Activated CD4-positive, alpha-beta memory T cell treated with anti-CD3 and anti-CD28 coated beads for 36 hours (primary cell): ENCODE measurements at regions of chr7 and their contacts with region 1.

Region 1: GRCh38 chr7:130419658-130420057 is 21.2 kb downstream of the CEP41 start:
- DNase-seq: no peak
- H3K4me3 Mint-ChIP-seq: no peak overlapping the region
- H3K27ac Mint-ChIP-seq: no peak overlapping the region
- H3K4me1 Mint-ChIP-seq: peaks cover 46% of the 10 kb centered on the region
- H3K27me3 Mint-ChIP-seq: no peaks in the 10 kb centered on the region

Region 2: GRCh38 chr7:130363026-130363798 is 56.4 kb before region 1 on chr7:
- CTCF ChIA-PET with region 1: no interaction called
- POLR2A ChIA-PET with region 1: no interaction called
- intact Hi-C with region 1: loop called (anchors 2 kb)
- DNase-seq: peak; percentile 87
- H3K4me3 Mint-ChIP-seq: no peak overlapping the region
- H3K27ac Mint-ChIP-seq: no peak overlapping the region
- H3K4me1 Mint-ChIP-seq: peaks cover 22% of the 10 kb centered on the region
- H3K27me3 Mint-ChIP-seq: peaks cover 2% of the 10 kb centered on the region

Region 3: DNA sequence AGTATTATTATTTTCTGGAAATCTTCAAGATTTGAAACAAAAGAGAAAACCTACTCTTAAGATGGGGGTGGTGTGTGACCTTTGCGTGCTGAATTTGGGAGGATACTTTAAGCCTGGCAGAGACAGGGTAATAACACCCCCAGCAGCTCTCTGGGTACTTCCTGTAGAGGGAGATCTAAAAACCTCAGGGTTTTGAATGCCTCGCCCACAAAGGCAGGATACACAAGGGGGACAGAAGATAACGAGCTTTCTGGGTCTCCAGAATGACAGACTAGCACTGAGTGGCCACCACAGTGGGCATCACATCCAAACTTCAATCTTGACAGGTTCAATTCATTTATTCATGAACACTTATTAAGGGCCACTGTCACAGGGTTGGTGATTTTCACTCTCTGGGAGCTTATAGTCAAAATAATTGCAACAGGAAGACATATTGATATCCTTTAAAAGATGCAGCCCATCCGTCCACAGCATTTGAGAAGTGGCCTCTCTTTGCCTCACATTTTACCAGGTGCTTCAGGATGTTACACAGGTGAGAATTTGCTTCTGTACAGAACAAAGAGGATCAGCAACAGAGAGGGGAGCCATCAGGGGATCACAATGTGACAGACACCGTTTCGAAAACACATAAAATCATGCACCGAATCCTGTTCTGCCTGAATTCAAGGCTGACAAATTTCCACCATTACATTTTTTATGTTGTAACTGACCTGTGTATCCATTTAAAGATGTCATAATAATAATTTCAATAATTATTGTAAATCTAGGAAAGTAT is 25.1 kb before region 1 on chr7:
- CTCF ChIA-PET with region 1: no interaction called
- POLR2A ChIA-PET with region 1: no interaction called
- intact Hi-C with region 1: loop called (anchors 2 kb)
- DNase-seq: peak; percentile 21
- H3K4me3 Mint-ChIP-seq: no peak overlapping the region
- H3K27ac Mint-ChIP-seq: no peak overlapping the region
- H3K4me1 Mint-ChIP-seq: peaks cover 16% of the 10 kb centered on the region
- H3K27me3 Mint-ChIP-seq: no peaks in the 10 kb centered on the region